ENCODE measurements at regions of chr4 and their contacts with region 1.

Region 1: GRCh38 chr4:151117371-151117962 is 18.0 kb downstream of the RPS3A start:
- DNase-seq: peak; percentile 23
- H3K4me3 ChIP-seq: no peak overlapping the region
- CTCF ChIP-seq: peak; percentile 56

Region 2: DNA sequence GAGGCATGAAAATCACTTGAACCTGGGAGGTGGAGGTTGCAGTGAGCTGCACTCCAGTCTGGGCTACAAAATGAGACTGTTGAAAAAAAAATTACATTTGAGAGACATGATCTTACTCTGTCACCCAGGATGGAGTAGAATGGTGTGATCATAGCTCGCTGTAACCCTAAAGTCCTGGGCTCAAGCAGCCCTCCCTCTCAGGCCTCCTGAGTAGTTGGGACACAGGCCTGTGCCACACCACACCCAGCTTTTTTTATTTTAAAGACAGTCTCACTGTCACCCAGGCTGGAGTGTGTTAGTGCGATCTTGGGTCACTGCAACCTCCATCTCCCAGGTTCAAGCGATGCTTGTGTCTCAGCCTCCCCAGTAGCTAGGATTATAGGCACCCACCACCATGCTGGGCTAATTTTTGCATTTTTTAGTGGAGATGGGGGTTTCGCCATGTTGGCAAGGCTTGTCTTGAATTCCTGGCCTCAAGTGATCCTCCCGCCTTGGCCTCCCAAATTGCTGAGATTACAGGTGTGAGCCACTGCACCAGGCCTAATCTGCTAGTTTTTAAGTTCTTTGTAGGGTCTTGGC is 11.9 kb before region 1 on chr4:
- CTCF ChIA-PET with region 1: interaction called, 12 read pairs
- POLR2A ChIA-PET with region 1: interaction called, 3 read pairs
- DNase-seq: no peak
- H3K4me3 ChIP-seq: no peak overlapping the region
- CTCF ChIP-seq: no peak

Region 3: DNA sequence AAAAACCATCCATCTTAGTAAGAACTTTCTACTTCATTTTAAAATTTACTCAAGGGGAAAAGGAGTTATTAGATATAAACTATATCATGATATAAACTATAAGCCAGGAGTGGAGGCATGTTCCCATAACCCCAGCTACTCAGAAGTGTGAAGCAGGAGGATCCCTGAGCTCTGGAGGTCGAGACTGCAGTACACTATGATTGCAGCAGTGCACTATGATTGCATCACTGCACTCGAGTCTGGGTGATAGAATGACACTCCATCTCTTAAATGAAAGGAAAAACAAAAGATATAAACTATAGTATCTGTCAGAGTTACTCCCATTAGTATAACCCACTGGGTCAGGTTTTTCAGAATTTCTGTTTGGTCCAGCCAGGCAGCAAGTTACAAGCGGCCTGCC is 29.5 kb after region 1 on chr4:
- CTCF ChIA-PET with region 1: interaction called, 12 read pairs
- POLR2A ChIA-PET with region 1: no interaction called
- DNase-seq: no peak
- H3K4me3 ChIP-seq: no peak overlapping the region
- CTCF ChIP-seq: no peak

Region 4: DNA sequence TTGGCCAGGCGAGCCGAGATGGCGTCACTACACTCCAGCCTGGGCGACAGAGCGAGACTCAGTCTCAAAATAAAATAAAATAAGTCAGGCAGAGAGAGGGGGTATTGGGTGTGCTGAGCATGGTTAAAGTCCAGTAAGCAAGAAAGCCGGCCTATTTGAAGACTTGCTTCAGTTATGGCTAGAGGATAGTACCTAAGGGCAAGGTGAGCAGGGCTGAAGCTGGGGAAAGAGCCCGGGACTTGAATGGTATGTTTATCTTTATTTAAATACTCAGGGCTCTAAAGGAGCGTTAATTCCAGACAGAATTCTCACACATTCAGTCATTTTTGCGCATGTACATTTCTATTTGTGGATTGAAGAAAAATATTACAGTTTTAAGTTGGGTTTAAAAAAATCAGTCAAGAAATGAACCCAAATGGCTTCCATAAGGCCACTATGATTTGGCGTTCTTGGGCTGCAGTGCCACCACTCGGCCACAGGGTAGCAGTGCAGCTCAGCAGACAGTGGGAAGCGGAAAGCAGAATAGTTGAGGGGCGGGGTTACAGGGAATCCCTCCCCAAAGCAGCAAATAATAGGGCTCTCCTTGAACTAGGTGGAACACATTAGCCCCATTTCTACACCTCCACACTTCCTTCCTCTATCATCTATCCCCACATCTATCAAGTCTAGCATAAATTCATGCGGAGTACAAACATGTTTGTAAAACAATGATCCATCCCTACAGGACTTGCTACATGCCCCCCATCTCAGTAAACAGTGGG is 245.1 kb after region 1 on chr4:
- CTCF ChIA-PET with region 1: interaction called, 17 read pairs
- POLR2A ChIA-PET with region 1: no interaction called
- DNase-seq: peak; percentile 21
- H3K4me3 ChIP-seq: no peak overlapping the region
- CTCF ChIP-seq: peak; percentile 98

Region 5: DNA sequence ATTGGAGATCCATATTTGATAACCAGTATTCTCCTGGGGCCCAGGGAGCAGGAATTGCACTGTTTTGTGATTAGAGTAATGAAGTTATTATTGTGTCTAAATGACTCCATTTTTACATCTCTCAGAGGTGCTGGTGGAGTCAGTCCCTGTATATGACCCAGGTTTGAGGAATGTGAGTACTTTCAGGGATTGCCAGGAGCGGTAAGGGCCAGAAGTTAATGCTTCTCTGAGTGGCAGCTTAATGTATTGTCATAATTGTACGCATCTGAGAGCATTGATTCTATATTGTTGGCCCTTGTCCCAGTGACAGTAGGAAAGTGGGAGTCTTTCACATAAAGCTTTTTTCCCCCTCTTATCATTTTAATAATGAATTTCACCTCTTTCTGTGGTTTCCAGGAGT is 497.1 kb after region 1 on chr4:
- CTCF ChIA-PET with region 1: interaction called, 26 read pairs
- POLR2A ChIA-PET with region 1: no interaction called
- DNase-seq: no peak
- H3K4me3 ChIP-seq: no peak overlapping the region
- CTCF ChIP-seq: no peak

Measured in AG04449 (cell line).